ENCODE measurements at regions of chr22 and their contacts with region 1.

Region 1: DNA sequence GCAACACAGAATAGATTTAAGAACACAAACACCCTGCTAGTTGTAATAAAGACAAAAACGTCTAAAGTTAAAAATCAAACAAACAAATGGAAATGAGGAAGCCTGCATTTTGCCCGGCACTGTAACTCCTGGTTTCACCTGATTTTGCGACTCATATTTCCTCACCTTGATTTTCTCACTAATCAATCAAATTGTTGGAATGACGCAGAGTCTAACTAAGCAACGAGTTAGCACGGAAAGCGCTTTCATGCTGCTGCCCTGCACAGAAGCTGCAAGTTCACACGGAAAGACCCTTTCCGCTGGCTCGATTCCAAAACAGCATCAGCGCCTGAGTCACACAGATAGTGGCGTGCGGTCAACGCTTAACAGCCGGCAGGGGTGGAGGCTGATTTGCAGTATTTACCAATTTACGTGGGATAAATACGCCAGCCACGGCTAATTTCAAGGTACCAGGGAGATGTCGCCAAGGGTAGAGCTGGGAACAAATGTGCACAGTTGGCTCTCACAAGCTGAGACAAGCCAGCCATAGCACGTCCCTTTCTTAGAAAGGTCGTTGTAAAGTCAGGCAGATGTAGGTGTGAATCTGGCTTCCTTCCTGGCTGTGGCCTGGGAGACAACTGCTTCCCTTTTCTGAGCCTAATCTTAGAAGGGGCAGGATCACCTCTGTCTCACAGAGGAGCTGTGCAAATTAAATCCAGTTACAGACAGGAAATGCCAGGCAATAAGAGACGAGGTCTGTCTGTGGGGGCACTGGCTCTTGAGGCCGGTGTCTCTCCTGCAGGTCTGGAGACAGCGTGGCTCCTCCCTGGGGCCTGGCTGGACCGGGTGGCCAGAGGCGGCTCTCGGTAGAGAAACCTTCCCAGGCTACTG is 76.9 kb upstream of the TTLL12 start:
- DNase-seq: peak; percentile 88
- ATAC-seq: peak; percentile 66
- H3K4me3 ChIP-seq: no peak overlapping the region
- H3K27ac ChIP-seq: no peak overlapping the region
- H3K4me1 ChIP-seq: peaks cover 11% of the 10 kb centered on the region; the same call in 1 of the 2 replicates
- H3K27me3 ChIP-seq: peaks cover 75% of the 10 kb centered on the region
- CTCF ChIP-seq: no peak
- POLR2A ChIP-seq: no peak
- RAD21 ChIP-seq: no peak

Region 2: DNA sequence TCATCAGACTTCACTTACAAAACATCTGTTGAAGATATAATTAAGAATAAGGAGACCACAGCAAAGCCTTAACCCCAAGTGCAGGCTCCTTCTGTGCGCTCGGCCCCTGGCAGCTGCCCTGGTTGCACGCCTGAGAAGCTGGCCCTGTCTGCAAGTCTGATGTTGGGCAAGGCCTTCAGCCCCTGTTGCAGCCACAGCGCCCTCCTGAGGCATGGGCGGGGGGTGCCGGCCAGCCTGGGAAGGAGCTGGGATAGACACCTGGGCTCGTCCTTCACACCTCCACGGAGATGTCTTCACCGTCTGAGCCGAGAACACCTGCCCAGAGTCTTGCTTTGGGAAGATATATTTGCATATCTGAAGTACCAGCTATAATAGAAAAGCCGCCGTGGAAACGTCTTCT is 252.0 kb after region 1 on chr22:
- CTCF ChIA-PET with region 1: no interaction called
- POLR2A ChIA-PET with region 1: no interaction called
- dilution Hi-C with region 1: no loop called
- in situ Hi-C with region 1: no loop called
- intact Hi-C with region 1: no loop called
- DNase-seq: no peak
- ATAC-seq: no peak
- H3K4me3 ChIP-seq: no peak overlapping the region
- H3K27ac ChIP-seq: no peak overlapping the region
- H3K4me1 ChIP-seq: no peaks in the 10 kb centered on the region
- H3K27me3 ChIP-seq: no peaks in the 10 kb centered on the region
- CTCF ChIP-seq: no peak
- POLR2A ChIP-seq: no peak
- RAD21 ChIP-seq: no peak

Region 3: DNA sequence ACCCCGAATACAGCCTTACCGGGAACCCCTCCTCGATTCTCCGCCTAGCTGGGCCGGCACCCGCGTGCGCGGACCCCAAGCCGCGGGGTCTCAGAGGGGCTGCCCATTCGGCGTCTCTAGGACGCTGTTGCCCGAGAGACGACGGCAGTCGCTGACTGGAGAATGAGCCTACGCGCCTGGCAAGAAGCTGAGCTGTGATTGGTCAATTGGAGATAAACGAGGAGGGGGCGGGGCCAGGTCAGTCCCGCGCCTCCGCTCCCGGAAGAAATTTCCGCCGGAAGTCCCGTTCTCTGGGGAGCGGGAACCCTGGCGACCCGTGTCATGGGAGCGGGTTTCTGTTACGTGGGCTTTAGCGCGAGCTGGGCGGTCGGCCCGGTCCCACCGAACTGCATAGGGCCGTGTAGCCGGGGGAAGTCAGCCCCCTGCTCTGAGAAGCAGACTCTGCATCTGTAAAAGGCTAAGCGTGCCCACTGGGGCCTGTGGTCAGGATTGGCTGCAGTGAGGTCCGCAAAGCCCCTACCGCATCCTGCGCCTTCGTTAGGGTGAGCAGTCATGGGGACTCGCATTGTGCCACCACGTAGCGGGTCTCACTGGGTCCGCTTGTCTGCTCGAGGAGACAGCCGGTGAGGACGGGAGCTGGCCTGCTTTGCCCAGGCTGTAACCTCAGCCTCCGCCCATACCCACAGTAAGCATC is 548.4 kb after region 1 on chr22 and contains the start of gene EFCAB6:
- CTCF ChIA-PET with region 1: no interaction called
- POLR2A ChIA-PET with region 1: no interaction called
- dilution Hi-C with region 1: no loop called
- in situ Hi-C with region 1: no loop called
- intact Hi-C with region 1: loop called (anchors 5 kb)
- DNase-seq: peak; percentile 90
- ATAC-seq: peak; percentile 96
- H3K4me3 ChIP-seq: peak within 1 kb of the TSS; percentile 58
- H3K27ac ChIP-seq: peak within 1 kb of the TSS; percentile 87
- H3K4me1 ChIP-seq: peaks cover 6% of the 10 kb centered on the region
- H3K27me3 ChIP-seq: no peaks in the 10 kb centered on the region
- CTCF ChIP-seq: no peak
- POLR2A ChIP-seq: peak; percentile 56
- RAD21 ChIP-seq: no peak
- total RNA-seq, gene EFCAB6: 1.1 TPM in 2 replicates

Measured in IMR-90 (cell line).